ENCODE measurements at regions of chr2 and their contacts with region 1.

Region 1: GRCh38 chr2:179020156-179020750 is 29.7 kb downstream of the CCDC141 start:
- DNase-seq: peak; percentile 30
- H3K4me3 ChIP-seq: no peak overlapping the region
- H3K27ac ChIP-seq: no peak overlapping the region
- H3K4me1 ChIP-seq: no peaks in the 10 kb centered on the region
- H3K27me3 ChIP-seq: peaks cover 4% of the 10 kb centered on the region
- CTCF ChIP-seq: peak; percentile 70

Region 2: GRCh38 chr2:178761759-178762371 is 258.4 kb before region 1 on chr2:
- CTCF ChIA-PET with region 1: no interaction called
- POLR2A ChIA-PET with region 1: no interaction called
- intact Hi-C with region 1: loop called (anchors 2 kb)
- DNase-seq: peak; percentile 52
- H3K4me3 ChIP-seq: no peak overlapping the region
- H3K27ac ChIP-seq: no peak overlapping the region
- H3K4me1 ChIP-seq: no peaks in the 10 kb centered on the region
- H3K27me3 ChIP-seq: peaks cover 36% of the 10 kb centered on the region
- CTCF ChIP-seq: peak; percentile 78

Region 3: GRCh38 chr2:178891265-178891958 is 128.8 kb before region 1 on chr2:
- CTCF ChIA-PET with region 1: no interaction called
- POLR2A ChIA-PET with region 1: no interaction called
- intact Hi-C with region 1: loop called (anchors 1 kb)
- DNase-seq: peak; percentile 72
- H3K4me3 ChIP-seq: no peak overlapping the region
- H3K27ac ChIP-seq: no peak overlapping the region
- H3K4me1 ChIP-seq: no peaks in the 10 kb centered on the region
- H3K27me3 ChIP-seq: no peaks in the 10 kb centered on the region
- CTCF ChIP-seq: peak; percentile 87

Region 4: GRCh38 chr2:179311101-179311500 is 290.8 kb after region 1 on chr2:
- CTCF ChIA-PET with region 1: no interaction called
- POLR2A ChIA-PET with region 1: no interaction called
- intact Hi-C with region 1: no loop called
- DNase-seq: no peak
- H3K4me3 ChIP-seq: no peak overlapping the region
- H3K27ac ChIP-seq: no peak overlapping the region
- H3K4me1 ChIP-seq: no peaks in the 10 kb centered on the region
- H3K27me3 ChIP-seq: no peaks in the 10 kb centered on the region
- CTCF ChIP-seq: no peak

Region 5: GRCh38 chr2:179331061-179331460 is 310.8 kb after region 1 on chr2:
- CTCF ChIA-PET with region 1: no interaction called
- POLR2A ChIA-PET with region 1: no interaction called
- intact Hi-C with region 1: no loop called
- DNase-seq: no peak
- H3K4me3 ChIP-seq: no peak overlapping the region
- H3K27ac ChIP-seq: no peak overlapping the region
- H3K4me1 ChIP-seq: peaks cover 11% of the 10 kb centered on the region
- H3K27me3 ChIP-seq: no peaks in the 10 kb centered on the region
- CTCF ChIP-seq: no peak

Measured in A673 (cell line).